Right ventricle myocardium inferior (tissue), 1 donor: ENCODE measurements at regions of chr11 and their contacts with region 1.

Region 1: GRCh38 chr11:12043959-12044819 is 35.8 kb upstream of the DKK3 start:
- DNase-seq: peak; percentile 89
- ATAC-seq: peak; percentile 89

Region 2: DNA sequence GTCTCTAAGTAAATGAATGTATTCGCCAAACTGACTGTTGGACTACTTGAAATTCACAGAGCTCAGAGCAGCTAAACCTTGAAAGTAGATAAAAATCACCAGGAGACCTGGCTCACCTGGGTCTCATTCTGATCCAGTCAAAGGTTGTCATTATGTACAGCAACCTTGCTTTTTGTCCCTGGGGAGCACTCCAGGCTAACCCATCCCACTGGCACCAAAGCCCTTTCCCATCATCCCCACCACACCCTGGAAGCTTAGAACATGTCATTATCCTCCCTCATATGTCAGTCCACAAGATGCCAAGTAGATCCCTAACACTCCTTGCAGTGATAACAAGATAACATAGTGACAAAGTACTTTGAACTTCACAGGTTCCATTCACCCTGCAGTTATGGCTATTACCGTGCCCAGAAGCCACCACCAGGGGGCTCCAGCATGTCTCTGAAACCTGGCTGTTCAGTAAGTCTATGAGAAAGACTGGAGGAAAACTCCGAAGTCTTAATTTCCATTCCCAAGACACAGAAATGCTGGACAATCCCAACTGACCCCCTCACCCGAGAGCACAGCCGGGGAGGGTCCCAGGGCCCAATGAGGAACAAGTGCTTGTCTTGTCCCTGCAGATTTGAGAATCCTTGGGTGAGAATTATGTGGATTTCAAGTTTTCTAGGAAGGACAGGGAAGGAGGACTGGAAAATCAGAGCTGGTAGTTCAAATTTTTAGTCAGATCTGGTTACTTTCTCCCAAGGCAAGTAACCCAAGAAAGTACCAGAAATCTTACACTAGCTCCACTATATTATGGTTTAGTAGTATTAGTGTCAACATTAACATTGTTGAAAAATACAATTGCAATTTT is 245.4 kb before region 1 on chr11:
- intact Hi-C with region 1: loop called (anchors 1 kb)
- DNase-seq: peak; percentile 88
- ATAC-seq: peak; percentile 84

Region 3: DNA sequence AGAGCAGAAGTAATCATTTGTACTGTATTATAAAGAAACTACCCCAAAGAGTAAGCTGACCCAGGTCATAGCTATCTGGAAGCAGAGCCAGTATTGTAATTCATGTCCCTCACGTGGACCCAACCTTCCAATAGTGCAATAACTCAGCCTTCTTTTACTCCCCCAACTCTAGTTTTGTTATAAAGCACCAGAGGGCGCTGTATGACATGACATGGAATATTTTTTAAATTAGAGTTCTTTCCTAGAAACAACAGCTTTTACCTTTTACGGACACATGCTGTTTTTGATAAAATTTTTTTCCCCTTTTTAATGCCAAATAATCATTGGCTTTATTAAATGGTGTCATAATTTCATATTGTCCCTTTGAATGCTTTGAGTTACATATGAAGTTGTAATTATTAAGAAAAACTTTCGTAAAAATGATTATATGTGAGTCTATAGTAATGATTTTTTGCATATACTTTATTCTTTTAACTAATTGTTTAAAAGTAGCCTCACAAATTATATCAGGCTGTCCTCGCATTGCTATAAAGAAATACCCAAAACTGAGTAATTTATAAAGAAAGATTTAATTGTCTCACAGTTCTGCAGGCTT is 112.6 kb before region 1 on chr11:
- intact Hi-C with region 1: loop called (anchors 1 kb)
- DNase-seq: no peak
- ATAC-seq: peak; percentile 60

Region 4: DNA sequence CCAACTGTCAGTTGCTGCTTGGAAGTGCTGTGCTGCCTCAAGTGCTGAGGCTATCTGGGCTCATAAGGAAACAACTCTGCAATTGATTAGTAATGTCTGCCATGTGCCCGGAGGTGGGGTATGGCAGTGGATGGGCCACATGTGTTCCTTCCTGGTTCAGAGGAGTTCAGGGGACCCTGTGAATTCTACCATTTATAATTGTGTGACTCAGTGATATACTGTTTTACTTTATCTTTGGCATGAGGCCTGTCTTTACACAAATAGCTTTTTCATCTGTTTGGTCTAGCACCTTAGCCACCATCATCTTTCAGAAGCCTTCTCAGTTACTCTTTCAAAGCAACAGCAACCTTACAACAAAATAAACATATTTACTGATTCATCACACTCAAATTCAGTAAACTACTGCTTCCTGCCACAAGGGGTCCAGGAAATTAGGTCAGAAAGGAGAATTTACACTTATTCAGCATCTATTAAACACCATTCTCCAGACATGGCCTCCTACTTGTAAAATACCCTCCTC is 56.6 kb before region 1 on chr11:
- intact Hi-C with region 1: loop called (anchors 5 kb)
- DNase-seq: no peak
- ATAC-seq: no peak

Region 5: GRCh38 chr11:12235947-12236743 is 192.0 kb after region 1 on chr11:
- intact Hi-C with region 1: loop called (anchors 1 kb)
- DNase-seq: no peak
- ATAC-seq: no peak